WTC11 (cell line): ENCODE measurements at regions of chr17 and their contacts with region 1.

Region 1: GRCh38 chr17:32877164-32877764 is 340 bp upstream of the MYO1D start:
- DNase-seq: peak; percentile 91
- ATAC-seq: peak; percentile 95
- H3K4me3 Mint-ChIP-seq: peak overlapping the region; percentile 61
- H3K27ac Mint-ChIP-seq: peak overlapping the region; percentile 67; the same call in 1 of the 2 replicates
- H3K4me1 Mint-ChIP-seq: peaks cover 20% of the 10 kb centered on the region
- H3K27me3 Mint-ChIP-seq: peaks cover 2% of the 10 kb centered on the region; the same call in 1 of the 2 replicates
- CTCF ChIP-seq: peak; percentile 86

Region 2: DNA sequence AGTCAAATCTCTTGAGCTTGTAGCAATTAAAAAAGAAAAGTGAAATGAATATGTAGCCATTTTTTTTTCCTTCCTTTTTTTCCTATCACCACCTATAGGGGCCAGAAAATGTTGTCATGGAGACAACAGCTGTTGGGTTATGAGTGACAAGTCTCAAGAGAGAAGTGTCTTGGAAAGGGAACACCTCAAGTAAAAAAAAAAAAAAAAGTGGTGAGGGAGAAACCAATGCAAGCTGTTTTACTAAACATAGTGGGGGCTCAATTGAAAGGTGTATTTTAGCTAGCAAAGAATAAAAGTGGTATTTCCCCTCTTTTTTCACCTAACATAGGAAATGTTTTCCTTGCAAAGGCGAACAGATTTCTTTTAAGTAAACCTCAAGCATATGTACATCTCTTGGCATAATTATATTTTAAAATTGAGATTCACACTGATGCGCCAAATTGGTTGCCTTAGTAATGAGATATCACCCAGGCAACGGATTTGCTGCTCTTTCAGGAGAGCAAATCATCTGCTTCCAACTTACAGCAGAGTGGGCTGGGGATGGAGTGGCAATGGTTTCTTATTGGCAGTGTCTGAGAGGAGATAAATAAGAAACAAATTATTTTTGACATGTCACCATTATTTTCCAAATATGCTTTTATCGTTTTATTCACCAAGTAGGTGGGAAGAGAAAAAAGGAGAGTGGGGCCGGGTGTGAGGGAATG is 183.9 kb before region 1 on chr17:
- CTCF ChIA-PET with region 1: no interaction called
- POLR2A ChIA-PET with region 1: no interaction called
- DNase-seq: no peak
- ATAC-seq: no peak
- H3K4me3 Mint-ChIP-seq: no peak overlapping the region
- H3K27ac Mint-ChIP-seq: no peak overlapping the region
- H3K4me1 Mint-ChIP-seq: no peaks in the 10 kb centered on the region
- H3K27me3 Mint-ChIP-seq: peaks cover 3% of the 10 kb centered on the region; the same call in 1 of the 2 replicates
- CTCF ChIP-seq: no peak

Region 3: GRCh38 chr17:32777436-32777835 is 99.8 kb before region 1 on chr17:
- CTCF ChIA-PET with region 1: interaction called, 119 read pairs
- POLR2A ChIA-PET with region 1: no interaction called
- DNase-seq: no peak
- ATAC-seq: no peak
- H3K4me3 Mint-ChIP-seq: no peak overlapping the region
- H3K27ac Mint-ChIP-seq: no peak overlapping the region
- H3K4me1 Mint-ChIP-seq: peaks cover 18% of the 10 kb centered on the region
- H3K27me3 Mint-ChIP-seq: no peaks in the 10 kb centered on the region
- CTCF ChIP-seq: no peak

Region 4: DNA sequence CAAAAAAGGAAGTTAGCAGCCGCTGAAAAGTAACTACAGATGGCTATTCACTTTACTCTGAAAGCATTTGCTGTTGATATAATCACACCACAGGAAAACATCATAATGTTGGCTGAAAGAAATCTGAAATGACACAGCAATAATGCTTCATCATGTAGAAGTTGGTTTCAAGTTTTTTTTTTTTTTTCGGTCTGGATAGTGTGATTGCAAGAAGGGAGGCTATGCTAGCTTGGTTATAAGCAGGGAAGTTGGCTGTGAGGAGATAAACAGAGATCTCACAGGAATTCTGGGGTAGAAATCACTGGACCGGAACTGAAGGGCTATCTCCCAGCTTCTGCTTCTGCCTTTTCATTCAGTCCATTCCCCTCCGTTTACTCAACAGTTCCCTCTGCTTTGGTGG is 58.2 kb before region 1 on chr17:
- CTCF ChIA-PET with region 1: interaction called, 15 read pairs
- POLR2A ChIA-PET with region 1: no interaction called
- DNase-seq: no peak
- ATAC-seq: no peak
- H3K4me3 Mint-ChIP-seq: no peak overlapping the region
- H3K27ac Mint-ChIP-seq: no peak overlapping the region
- H3K4me1 Mint-ChIP-seq: peaks cover 2% of the 10 kb centered on the region; the same call in 1 of the 2 replicates
- H3K27me3 Mint-ChIP-seq: no peaks in the 10 kb centered on the region; the same call in 1 of the 2 replicates
- CTCF ChIP-seq: no peak

Region 5: DNA sequence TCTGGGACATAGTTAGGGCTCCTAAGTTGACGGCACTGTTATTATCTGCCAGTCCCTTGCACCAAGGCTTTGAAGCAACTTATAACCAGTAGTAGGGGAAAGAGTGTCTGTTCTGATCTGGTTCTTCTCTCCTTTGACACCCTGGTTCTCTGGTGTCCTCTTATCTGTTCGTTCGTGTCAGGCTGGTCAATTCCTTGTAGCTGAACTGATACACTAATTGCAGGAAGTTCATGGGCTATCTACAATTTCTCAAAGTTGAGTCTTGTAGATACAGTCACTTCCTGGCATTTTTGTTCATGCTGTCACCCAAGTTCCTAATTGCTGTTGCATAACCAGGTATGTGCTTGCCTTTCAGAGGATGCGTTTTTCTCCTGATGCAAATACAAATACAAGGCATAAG is 17.0 kb after region 1 on chr17:
- CTCF ChIA-PET with region 1: interaction called, 22 read pairs
- POLR2A ChIA-PET with region 1: no interaction called
- DNase-seq: no peak
- ATAC-seq: no peak
- H3K4me3 Mint-ChIP-seq: no peak overlapping the region
- H3K27ac Mint-ChIP-seq: no peak overlapping the region
- H3K4me1 Mint-ChIP-seq: no peaks in the 10 kb centered on the region
- H3K27me3 Mint-ChIP-seq: peaks cover 5% of the 10 kb centered on the region; the same call in 1 of the 2 replicates
- CTCF ChIP-seq: no peak

Region 6: GRCh38 chr17:32927724-32928585 is 50.7 kb after region 1 on chr17 and contains the start of gene TMEM98:
- CTCF ChIA-PET with region 1: interaction called, 26 read pairs
- POLR2A ChIA-PET with region 1: interaction called, 7 read pairs
- DNase-seq: peak; percentile 43
- ATAC-seq: peak; percentile 78
- H3K4me3 Mint-ChIP-seq: peak within 1 kb of the TSS; percentile 77
- H3K27ac Mint-ChIP-seq: peak within 1 kb of the TSS; percentile 64; the same call in 1 of the 2 replicates
- H3K4me1 Mint-ChIP-seq: peaks cover 12% of the 10 kb centered on the region
- H3K27me3 Mint-ChIP-seq: peaks cover 5% of the 10 kb centered on the region; the same call in 1 of the 2 replicates
- CTCF ChIP-seq: no peak
- total RNA-seq, gene TMEM98: 66.0 to 70.3 TPM (median 69.8 TPM) in 3 replicates

Region 7: GRCh38 chr17:32971171-32971570 is 93.9 kb after region 1 on chr17:
- CTCF ChIA-PET with region 1: no interaction called
- POLR2A ChIA-PET with region 1: no interaction called
- DNase-seq: no peak
- ATAC-seq: no peak
- H3K4me3 Mint-ChIP-seq: no peak overlapping the region
- H3K27ac Mint-ChIP-seq: no peak overlapping the region
- H3K4me1 Mint-ChIP-seq: no peaks in the 10 kb centered on the region
- H3K27me3 Mint-ChIP-seq: peaks cover 16% of the 10 kb centered on the region
- CTCF ChIP-seq: no peak

Region 8: DNA sequence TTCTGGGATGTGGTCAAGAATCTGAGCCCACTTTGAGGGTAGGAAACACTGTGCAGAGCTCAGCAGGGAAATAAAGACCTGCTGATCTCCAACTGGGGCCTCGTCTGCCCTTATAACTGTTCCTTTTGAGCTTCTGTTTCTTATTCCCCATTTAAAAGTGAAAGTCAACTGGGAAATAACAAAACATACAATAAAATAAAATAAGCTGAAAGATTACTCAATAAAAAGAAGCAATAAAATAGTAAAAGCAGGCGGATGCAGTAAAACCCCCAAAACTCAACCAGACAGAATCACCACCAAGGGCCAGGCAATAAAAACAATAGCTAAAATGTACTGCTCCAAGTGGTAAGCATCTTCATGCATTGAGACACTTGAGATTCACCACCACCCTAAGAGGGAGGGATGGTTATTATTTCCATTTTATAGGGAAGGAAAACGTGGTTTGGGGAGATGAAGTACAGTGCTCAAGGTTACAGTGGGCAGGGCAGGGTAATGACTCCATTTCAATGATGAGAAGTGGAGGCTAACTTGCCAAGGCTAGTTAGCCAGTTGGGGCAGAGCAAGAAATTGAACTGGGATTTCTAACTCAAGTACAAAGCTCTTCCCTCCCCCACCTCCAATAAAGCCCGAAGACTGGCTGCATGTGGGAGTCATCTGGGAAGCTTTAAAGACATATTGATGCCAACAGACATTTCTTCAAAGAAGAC is 107.9 kb after region 1 on chr17:
- CTCF ChIA-PET with region 1: no interaction called
- POLR2A ChIA-PET with region 1: no interaction called
- DNase-seq: no peak
- ATAC-seq: no peak
- H3K4me3 Mint-ChIP-seq: no peak overlapping the region
- H3K27ac Mint-ChIP-seq: no peak overlapping the region
- H3K4me1 Mint-ChIP-seq: no peaks in the 10 kb centered on the region
- H3K27me3 Mint-ChIP-seq: peaks cover 49% of the 10 kb centered on the region
- CTCF ChIP-seq: no peak